A673 (cell line): ENCODE measurements at regions of chr18 and their contacts with region 1.

Region 1: DNA sequence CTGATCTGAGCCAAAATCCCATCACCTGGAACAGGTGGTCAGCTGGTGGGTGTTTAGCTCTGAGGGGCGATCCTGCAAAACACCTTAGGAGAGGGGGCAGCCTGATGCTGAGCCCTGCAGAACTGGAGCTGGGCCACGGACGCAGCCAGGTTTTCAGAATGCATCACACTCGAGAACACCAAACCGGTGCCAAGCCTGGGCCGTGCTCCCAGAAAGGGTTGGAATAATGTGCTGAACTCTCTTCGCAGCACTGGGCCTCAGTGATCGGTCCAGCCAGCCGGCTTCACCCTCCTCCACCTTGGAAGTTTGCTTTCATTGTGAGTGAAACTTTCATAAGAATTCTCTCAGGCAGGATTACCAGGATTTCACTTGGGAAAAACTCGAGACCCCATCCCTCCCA is 56.5 kb upstream of the TTC39C start:
- DNase-seq: no peak
- H3K4me3 ChIP-seq: no peak overlapping the region
- H3K27ac ChIP-seq: no peak overlapping the region
- H3K4me1 ChIP-seq: no peaks in the 10 kb centered on the region
- H3K27me3 ChIP-seq: no peaks in the 10 kb centered on the region
- CTCF ChIP-seq: no peak

Region 2: GRCh38 chr18:24262087-24262486 is 304.1 kb after region 1 on chr18:
- CTCF ChIA-PET with region 1: interaction called, 10 read pairs
- POLR2A ChIA-PET with region 1: no interaction called
- intact Hi-C with region 1: no loop called
- DNase-seq: no peak
- H3K4me3 ChIP-seq: no peak overlapping the region
- H3K27ac ChIP-seq: no peak overlapping the region
- H3K4me1 ChIP-seq: no peaks in the 10 kb centered on the region
- H3K27me3 ChIP-seq: no peaks in the 10 kb centered on the region
- CTCF ChIP-seq: no peak